Activated naive CD4-positive, alpha-beta T cell treated with anti-CD3 and anti-CD28 coated beads for 36 hours (primary cell): ENCODE measurements at regions of chr21 and their contacts with region 1.

Region 1: DNA sequence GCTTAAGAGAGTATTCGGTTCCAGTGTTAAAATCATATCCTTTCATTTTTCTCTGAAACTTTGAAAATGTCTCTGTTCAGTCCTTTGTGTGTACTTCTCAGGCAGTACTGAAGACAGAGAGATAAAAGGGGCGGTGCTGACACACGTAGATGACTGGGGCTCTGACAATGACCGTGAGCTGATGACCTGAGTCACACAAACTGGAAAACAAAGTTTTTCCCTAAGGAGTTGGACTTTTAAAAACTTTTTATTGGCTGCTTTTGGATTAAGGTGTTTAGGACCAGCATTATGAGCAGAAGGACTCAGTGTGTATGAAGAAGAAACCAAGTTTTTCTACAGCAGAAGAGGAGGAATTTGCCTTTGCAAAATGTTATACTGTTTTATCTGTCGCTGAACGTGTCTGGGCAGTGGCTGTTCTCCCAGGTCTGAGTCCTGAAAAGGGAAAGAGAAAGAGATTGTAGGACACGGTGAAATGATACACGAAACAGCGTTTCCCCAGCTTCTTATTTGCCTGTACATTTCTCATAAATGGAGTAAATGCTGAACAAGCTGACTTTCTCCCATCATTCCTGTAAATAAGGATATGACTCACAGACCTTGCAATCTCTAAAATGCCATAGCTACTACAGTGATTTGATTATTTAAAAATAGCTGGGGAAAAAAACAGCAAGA is 51.5 kb downstream of the MAP3K7CL start:
- DNase-seq: peak; percentile 37
- H3K4me3 Mint-ChIP-seq: peak overlapping the region; percentile 45
- H3K27ac Mint-ChIP-seq: peak overlapping the region; percentile 93
- H3K4me1 Mint-ChIP-seq: peaks cover 14% of the 10 kb centered on the region
- H3K27me3 Mint-ChIP-seq: no peaks in the 10 kb centered on the region

Region 2: DNA sequence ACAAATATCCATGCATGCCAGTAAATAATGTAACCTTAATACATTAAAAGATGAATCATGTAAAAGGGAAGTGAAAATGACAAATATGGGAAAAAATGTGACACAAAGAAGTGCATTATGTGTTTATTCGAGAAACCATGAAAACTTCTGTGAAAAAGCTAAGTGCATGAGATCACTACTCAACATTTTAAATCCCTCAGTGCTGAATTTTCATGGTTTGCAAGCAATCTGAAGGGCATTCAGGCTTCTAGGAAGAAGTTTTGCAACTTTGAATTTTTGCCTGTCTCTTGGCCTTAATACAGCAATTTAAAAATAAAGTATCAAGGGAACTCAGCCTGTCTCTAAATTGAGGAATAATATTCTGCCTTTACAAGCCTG is 26.7 kb after region 1 on chr21:
- CTCF ChIA-PET with region 1: no interaction called
- intact Hi-C with region 1: loop called (anchors 1 kb)
- DNase-seq: no peak
- H3K4me3 Mint-ChIP-seq: no peak overlapping the region
- H3K27ac Mint-ChIP-seq: peak overlapping the region; percentile 75
- H3K4me1 Mint-ChIP-seq: peaks cover 30% of the 10 kb centered on the region
- H3K27me3 Mint-ChIP-seq: no peaks in the 10 kb centered on the region

Region 3: GRCh38 chr21:29238967-29239290 is 57.0 kb after region 1 on chr21:
- CTCF ChIA-PET with region 1: no interaction called
- intact Hi-C with region 1: no loop called
- DNase-seq: no peak
- H3K4me3 Mint-ChIP-seq: no peak overlapping the region
- H3K27ac Mint-ChIP-seq: no peak overlapping the region
- H3K4me1 Mint-ChIP-seq: peaks cover 24% of the 10 kb centered on the region
- H3K27me3 Mint-ChIP-seq: peaks cover 3% of the 10 kb centered on the region

Region 4: DNA sequence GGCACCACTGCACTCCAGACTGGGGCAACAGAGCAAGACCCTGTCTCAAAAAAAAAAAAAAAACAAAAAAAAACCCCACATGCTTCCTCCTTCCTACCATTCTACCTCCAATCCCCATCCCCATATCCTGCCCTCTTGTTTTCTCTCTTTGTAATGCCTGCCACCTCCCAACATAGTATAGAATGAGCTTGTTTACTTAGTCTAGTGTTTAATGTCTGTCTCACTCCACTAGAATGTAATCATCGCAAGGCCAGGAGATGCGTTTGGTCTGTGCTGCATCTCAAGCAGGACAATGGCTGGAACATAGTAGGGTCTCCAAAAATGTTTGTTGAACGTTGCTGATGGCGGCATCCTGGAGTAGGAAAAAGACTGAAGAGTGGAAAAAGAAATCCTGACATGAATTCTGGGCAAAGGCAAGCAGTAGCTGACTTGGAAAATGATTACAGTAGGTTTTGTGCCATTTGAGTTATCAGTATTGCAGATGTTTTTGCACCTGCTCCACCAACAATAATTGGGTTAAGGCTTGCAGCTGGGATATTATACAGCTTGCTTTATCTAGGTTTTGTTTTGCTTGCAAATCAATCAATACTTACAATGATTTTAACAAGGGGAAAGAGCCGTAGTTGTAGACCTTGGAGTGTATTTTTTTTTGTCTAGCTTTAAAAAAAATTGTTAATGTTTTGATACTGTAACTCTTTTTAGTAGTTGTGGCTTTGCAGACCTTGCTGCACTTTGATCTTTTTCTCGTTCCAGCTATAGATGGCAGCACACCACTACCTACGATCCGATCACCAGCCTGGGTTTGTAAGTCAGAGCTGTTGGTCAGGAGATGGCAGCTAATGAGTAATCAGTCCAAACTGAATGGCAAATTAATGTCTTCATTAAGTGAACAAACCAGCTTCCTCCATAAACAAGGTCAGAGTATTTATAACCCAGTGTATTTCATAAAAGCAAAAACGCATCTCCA is 179.1 kb after region 1 on chr21:
- CTCF ChIA-PET with region 1: no interaction called
- intact Hi-C with region 1: no loop called
- DNase-seq: peak; percentile 36
- H3K4me3 Mint-ChIP-seq: no peak overlapping the region
- H3K27ac Mint-ChIP-seq: no peak overlapping the region
- H3K4me1 Mint-ChIP-seq: peaks cover 10% of the 10 kb centered on the region
- H3K27me3 Mint-ChIP-seq: no peaks in the 10 kb centered on the region